Dendritic cell treated with granulocyte-macrophage colony-stimulating factor and Interleukin-4, amounts not matched to agents 40 ng/mL and 50 ng/mL, for 4 days (primary cell): ENCODE measurements at regions of chr7 and their contacts with region 1.

Region 1: DNA sequence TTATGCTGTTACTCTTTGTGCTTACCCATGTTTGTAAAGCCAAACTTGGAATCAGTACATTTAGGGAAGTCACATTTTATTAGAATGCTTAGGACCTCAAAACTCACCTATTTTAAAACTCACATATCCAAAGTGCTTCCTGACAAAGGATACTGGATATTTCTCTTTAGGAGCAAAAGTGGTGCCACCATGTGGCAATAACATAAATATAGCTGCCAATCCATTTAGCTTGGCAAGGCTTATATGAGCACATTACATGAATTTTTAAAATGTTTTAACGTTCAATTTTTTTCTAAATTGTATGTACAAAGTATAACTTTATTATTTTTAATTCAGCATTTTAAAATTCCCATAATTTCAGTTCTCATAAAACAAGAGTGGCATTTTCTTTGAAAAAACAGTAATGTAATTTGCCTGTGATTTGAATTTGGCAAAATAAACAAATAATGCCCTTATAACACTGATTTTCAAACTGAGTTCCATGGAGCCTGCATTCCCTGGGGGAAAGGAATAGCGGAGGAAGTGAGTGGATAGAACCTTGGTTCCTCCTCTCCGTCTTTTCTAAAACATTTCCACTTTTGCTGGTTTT is 75.4 kb downstream of the HDAC9 start:
- H3K4me3 Mint-ChIP-seq: no peak overlapping the region
- H3K27ac Mint-ChIP-seq: no peak overlapping the region
- H3K4me1 Mint-ChIP-seq: peaks cover 2% of the 10 kb centered on the region
- H3K27me3 Mint-ChIP-seq: no peaks in the 10 kb centered on the region

Region 2: DNA sequence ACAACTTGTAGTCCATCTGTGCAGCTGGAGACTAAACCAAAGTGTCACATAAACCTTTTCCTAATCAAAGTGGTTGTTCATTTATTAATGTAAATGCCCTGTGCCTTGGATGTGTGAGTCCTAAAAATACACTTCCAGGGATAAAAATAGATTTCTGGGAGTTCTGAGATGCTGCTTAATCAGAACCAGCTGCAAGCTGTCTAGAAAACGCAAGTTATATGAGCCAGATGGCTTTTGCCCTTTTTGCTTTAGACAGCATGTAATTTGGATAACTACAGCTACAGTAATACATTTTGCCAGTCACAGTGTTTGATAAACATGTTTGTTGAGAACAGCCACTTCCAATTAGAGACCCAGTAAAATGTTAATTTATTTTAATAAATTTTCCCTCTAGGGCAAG is 358.2 kb before region 1 on chr7:
- intact Hi-C with region 1: loop called (anchors 10 kb)
- H3K4me3 Mint-ChIP-seq: no peak overlapping the region
- H3K27ac Mint-ChIP-seq: no peak overlapping the region
- H3K4me1 Mint-ChIP-seq: peaks cover 24% of the 10 kb centered on the region
- H3K27me3 Mint-ChIP-seq: no peaks in the 10 kb centered on the region